Sigmoid colon (tissue), 7 donors: ENCODE measurements at regions of chr11 and their contacts with region 1.

Region 1: DNA sequence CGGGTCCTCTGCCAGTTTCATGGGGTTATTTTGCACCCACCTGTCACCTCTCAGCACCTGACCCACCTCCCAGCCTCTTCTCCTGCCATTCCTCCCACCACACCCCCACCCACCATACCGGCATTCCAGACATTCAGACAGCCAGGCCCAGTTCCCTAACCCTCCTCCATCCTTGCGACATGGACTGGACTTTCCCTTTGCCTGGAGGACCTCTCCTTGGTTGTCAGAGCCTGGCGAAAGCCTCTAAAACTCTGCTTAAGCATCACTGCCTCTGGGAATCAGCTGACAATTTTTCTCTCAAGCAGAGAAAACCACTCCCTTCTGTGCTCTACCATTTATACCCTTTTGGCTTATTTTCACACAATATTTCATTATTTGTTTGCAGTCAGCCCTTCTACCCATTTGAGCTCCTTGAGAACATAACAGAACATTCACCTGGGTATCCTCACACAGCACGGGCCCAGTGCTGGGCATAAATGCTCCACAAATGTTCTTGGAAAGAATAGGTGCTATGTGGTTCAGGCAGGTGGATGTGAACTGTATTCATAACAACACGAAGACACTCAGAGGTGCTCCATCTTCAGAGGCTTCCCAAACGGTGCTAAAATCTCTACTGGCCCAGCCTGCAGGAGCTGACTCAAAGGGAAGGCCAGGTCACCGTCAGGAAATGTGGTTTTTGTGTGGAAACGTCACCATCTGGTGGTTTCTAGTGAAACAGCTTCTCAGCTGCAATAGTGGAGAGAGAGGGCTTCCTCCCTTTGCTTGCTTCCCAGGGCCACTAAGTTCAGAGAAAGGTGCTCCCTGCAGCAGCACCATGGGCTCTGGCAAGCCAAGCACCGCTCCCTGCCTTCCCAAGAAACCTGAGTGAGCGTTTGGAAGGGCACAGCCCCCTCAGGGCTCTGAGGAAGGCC is 10.4 kb downstream of the SPATA19 start:
- DNase-seq: no peak
- H3K4me3 ChIP-seq: no peak overlapping the region
- H3K27ac ChIP-seq: no peak overlapping the region
- H3K4me1 ChIP-seq: peaks cover 0 to 4% (median 0%) of the 10 kb centered on the region in 4 donors
- H3K27me3 ChIP-seq: peaks cover 0 to 19% (median 0%) of the 10 kb centered on the region in 3 donors
- CTCF ChIP-seq: peak; percentile 28 to 60 (median 48)
- EP300 ChIP-seq: no peak
- POLR2A ChIP-seq: no peak

Region 2: DNA sequence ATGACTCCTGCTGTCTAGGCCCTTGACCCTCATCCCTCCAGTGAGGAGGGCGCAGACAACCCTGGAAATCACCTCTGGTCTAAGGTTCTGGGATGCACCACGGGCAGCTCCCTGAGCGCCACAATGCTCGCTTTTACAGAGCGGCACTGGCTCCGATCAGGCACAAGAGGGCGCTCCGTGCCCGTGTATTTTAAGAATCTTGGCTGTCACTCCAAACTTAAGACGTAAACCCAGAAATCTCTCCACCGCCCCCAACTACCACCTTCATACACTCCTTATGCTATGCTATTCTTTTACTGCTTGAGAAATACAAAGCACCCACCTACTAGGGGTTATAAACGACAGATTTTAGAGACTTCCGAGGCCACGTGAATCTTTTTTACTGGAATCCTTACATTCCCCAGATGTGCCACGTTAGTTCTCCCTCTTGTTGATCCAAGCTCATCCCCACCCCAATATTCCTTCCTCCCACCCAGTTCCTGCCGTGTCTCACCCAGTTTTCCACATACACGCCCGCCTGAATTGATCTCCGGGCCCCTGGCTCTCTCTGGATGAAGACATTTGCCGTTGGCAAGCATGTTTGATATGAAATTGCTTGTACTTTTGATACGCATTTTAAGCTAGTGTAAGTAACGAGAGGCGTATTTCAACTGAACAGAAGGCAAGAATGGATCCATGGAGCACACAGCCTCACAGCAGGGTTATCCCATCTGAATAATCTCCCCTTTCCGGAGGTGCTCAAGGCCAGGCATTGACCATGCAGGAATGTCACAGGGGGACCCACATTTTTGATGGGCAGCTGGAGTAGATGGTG is 756.1 kb before region 1 on chr11:
- intact Hi-C with region 1: loop called (anchors 2 kb)
- DNase-seq: no peak
- H3K4me3 ChIP-seq: no peak overlapping the region
- H3K27ac ChIP-seq: no peak overlapping the region
- H3K4me1 ChIP-seq: peaks cover 0 to 11% (median 7%) of the 10 kb centered on the region in 4 donors
- H3K27me3 ChIP-seq: peaks cover 0 to 47% (median 25%) of the 10 kb centered on the region in 3 donors
- CTCF ChIP-seq: peak; percentile 24 to 65 (median 48)
- EP300 ChIP-seq: no peak
- POLR2A ChIP-seq: no peak

Region 3: DNA sequence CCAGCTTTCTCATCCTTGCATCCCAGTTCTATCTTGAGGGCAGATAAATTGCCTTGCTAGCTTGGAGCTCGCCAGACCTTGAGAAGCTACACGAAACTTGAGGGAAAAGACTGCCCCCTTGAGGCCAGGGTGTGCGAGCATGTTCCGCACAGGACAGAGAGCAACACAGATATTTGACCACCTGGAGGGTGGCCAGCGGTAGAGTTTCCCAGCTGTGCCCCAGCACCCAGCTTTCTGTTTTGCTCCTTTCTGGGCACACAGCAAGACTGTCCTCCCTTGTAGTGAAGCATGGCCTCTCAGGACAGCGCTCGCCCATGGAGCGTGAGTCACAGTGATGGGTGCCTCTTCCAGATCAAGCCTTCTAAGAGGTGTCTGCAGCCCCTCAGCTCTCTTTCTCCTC is 13.2 kb before region 1 on chr11:
- intact Hi-C with region 1: no loop called
- DNase-seq: no peak
- H3K4me3 ChIP-seq: no peak overlapping the region
- H3K27ac ChIP-seq: no peak overlapping the region
- H3K4me1 ChIP-seq: no peaks in the 10 kb centered on the region
- H3K27me3 ChIP-seq: peaks cover 0 to 7% (median 0%) of the 10 kb centered on the region in 3 donors
- CTCF ChIP-seq: peak in 2 of 4 experiments; percentile 21 to 49
- EP300 ChIP-seq: no peak
- POLR2A ChIP-seq: no peak

Region 4: GRCh38 chr11:133895061-133895479 is 60.1 kb after region 1 on chr11:
- intact Hi-C with region 1: no loop called
- DNase-seq: peak; percentile 54
- H3K4me3 ChIP-seq: no peak overlapping the region
- H3K27ac ChIP-seq: peak overlapping the region in 1 of 4 donors; percentile 63
- H3K4me1 ChIP-seq: peaks cover 0 to 10% (median 9%) of the 10 kb centered on the region in 4 donors
- H3K27me3 ChIP-seq: no peaks in the 10 kb centered on the region
- CTCF ChIP-seq: no peak
- EP300 ChIP-seq: no peak
- POLR2A ChIP-seq: no peak

Region 5: DNA sequence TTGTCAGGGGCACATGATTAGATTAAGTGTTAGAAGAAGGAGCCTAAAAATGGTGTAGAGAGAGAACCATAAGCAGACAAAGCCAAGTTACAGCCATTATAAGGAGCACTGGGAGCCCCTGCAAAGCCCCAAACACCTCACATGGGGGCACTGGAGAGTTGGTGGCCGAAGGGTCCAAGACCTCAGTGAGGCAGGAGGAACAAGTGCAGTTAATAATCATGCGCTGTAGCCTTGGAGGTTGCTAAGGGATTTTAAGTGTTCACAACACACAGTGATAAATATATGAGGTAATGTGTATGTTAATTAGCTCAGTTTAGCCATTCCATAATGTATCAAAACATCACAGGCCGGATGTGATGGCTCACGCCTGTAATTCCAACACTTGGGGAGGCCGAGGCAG is 179.6 kb after region 1 on chr11:
- intact Hi-C with region 1: no loop called
- DNase-seq: no peak
- H3K4me3 ChIP-seq: no peak overlapping the region
- H3K27ac ChIP-seq: peak overlapping the region in 1 of 4 donors; percentile 68
- H3K4me1 ChIP-seq: peaks cover 0 to 13% (median 9%) of the 10 kb centered on the region in 4 donors
- H3K27me3 ChIP-seq: no peaks in the 10 kb centered on the region
- CTCF ChIP-seq: peak in 3 of 4 experiments; percentile 12 to 43 (median 35)
- EP300 ChIP-seq: no peak
- POLR2A ChIP-seq: no peak

Region 6: DNA sequence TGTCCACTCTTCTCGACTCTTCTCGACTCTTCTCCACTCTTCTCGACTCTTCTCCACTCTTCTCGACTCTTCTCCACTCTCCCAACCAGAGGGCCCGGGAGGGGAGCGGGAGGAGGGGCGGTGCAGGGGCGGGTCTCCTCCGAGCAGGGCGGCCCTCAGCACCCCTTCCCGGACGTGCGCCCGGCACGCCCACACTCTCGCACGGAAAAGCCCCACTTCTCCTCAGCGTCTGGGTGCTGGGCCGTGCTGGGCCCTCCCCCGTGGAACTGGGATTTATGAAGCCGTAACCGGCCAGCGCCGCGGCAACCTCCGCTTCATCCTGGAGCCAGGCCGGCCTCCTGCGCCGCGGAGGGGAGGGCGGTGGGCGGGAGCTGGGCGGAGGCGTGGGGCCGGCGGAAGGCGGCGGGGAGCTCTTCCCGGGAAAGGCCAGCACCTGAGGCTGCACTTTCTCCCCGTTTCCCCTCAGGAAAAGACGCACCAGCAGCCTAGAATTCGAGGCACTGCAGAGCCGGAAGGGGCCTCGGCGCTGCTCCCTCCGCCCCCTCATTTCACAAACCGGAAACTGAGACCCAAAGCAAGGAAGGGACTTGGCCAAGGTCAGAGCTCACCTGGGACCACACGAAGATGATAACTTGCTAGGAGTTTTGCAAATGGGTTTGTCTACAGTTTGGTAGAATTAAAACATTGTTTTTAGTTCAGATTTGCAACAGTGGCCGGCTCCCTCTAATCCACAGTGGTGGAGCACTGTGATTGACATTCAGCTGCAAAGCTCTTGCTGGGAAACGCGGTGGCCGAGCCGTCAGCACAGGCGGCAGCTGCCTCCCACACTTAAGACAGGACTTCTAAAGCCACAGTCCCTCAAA is 202.3 kb after region 1 on chr11:
- intact Hi-C with region 1: no loop called
- DNase-seq: peak; percentile 94
- H3K4me3 ChIP-seq: peak overlapping the region; percentile 40 to 60 (median 56)
- H3K27ac ChIP-seq: peak overlapping the region; percentile 92 to 98 (median 93)
- H3K4me1 ChIP-seq: peaks cover 2 to 99% (median 94%) of the 10 kb centered on the region in 4 donors
- H3K27me3 ChIP-seq: no peaks in the 10 kb centered on the region
- CTCF ChIP-seq: no peak
- EP300 ChIP-seq: peak in 1 of 4 donors; percentile 61
- POLR2A ChIP-seq: no peak